A549 (cell line): ENCODE measurements at regions of chr3 and their contacts with region 1.

Region 1: GRCh38 chr3:194315088-194315964 is 35.8 kb downstream of the CPN2 start:
- DNase-seq: peak; percentile 72 to 86
- ATAC-seq: peak; percentile 86 to 89
- H3K4me3 ChIP-seq: peak overlapping the region; percentile 43
- H3K27ac ChIP-seq: peak overlapping the region; percentile 78 to 88
- H3K4me1 ChIP-seq: peaks cover 56% of the 10 kb centered on the region
- CTCF ChIP-seq: peak; percentile 82
- EP300 ChIP-seq: peak in 1 of 2 experiments; percentile 54; a peak in 1 of 5 replicates
- POLR2A ChIP-seq: no peak
- RAD21 ChIP-seq: peak; percentile 86 to 97

Region 2: DNA sequence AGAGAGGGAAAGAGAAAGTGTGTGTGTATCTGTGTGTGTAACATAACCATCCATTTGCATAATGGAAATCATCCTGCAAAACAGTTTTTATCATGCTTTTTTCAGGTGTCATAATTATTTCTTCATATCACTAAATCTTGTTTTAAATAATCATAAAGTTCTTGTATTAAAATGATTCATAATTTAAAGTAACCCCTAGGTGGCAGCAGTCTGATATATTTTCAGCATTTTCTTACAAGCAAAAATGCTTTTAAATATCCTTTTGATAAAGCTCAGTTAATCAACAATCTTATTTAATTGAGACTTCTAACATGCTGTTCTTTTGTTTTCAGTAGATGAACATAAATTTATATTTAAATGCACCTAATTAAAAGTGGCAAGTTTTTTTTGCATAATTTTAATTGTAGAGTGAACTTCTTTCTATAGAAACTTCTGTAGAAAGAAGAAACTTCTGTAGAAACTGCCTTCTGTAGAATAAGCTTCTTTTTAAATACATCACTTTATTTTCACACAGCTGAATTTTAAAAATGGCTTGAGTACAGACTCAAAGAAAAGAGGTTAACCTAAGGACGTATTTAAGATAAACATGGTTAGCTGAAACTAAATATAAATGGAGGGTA is 649.8 kb before region 1 on chr3:
- CTCF ChIA-PET with region 1: interaction called, 26 read pairs
- POLR2A ChIA-PET with region 1: interaction called, 4 read pairs
- DNase-seq: peak in 1 of 2 experiments; percentile 21
- ATAC-seq: no peak
- H3K4me3 ChIP-seq: no peak overlapping the region
- H3K27ac ChIP-seq: no peak overlapping the region
- H3K4me1 ChIP-seq: no peaks in the 10 kb centered on the region
- CTCF ChIP-seq: peak; percentile 49
- EP300 ChIP-seq: no peak
- POLR2A ChIP-seq: no peak
- RAD21 ChIP-seq: peak; percentile 55 to 64

Region 3: DNA sequence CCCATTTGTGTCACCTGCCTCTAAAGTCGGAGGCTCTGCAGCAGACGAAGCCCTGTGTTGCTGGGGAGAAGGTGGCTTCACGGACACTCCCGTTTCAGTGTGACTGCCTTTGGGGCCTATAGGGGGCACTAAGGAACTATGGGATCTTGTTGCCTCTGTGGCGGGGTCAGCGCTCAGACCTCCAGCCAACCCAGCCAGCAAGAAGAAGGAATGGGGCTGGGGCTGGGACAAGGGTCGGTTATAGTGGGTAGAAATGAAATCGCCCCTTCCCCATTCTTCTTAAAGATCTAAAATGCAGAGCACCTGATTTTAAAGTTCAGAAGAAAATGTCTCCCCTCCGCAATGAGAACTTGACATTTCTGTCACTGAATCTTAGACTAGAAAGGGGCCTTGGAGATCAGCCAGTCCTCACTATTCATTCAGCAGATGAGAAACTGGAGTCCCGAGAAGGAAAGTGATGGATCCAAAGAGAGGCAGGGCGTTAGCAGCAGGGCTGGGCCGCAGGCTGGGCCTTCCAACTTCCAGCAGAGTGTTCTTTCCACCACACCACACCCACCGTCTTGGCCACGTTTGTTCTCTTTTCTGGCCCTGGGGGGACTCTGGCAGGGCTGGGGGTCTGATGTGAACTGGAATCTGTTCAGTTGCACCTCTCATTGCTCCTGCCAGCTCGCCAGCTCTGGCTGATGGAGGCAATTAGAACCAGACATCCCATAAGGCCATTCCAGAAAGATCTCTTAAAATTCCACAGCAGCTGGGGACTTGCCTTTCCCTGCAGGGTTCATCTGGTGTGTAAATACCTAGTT is 526.9 kb before region 1 on chr3:
- CTCF ChIA-PET with region 1: interaction called, 213 read pairs
- POLR2A ChIA-PET with region 1: no interaction called
- DNase-seq: peak; percentile 63 to 74
- ATAC-seq: peak; percentile 88 to 97
- H3K4me3 ChIP-seq: no peak overlapping the region
- H3K27ac ChIP-seq: peak overlapping the region; percentile 53 to 66; a peak in 4 of 6 replicates
- H3K4me1 ChIP-seq: peaks cover 18% of the 10 kb centered on the region
- CTCF ChIP-seq: peak; percentile 61
- EP300 ChIP-seq: no peak
- POLR2A ChIP-seq: no peak
- RAD21 ChIP-seq: peak; percentile 87

Region 4: GRCh38 chr3:194083637-194084224 is 231.6 kb before region 1 on chr3:
- CTCF ChIA-PET with region 1: interaction called, 10 read pairs
- POLR2A ChIA-PET with region 1: no interaction called
- DNase-seq: no peak
- ATAC-seq: no peak
- H3K4me3 ChIP-seq: no peak overlapping the region
- H3K27ac ChIP-seq: peak overlapping the region in 1 of 2 experiments; percentile 62; a peak in 3 of 6 replicates
- H3K4me1 ChIP-seq: peaks cover 11% of the 10 kb centered on the region
- CTCF ChIP-seq: no peak
- EP300 ChIP-seq: no peak
- POLR2A ChIP-seq: no peak
- RAD21 ChIP-seq: no peak

Region 5: GRCh38 chr3:194141415-194142155 is 173.7 kb before region 1 on chr3:
- CTCF ChIA-PET with region 1: interaction called, 116 read pairs
- POLR2A ChIA-PET with region 1: interaction called, 14 read pairs
- DNase-seq: peak; percentile 66 to 83
- ATAC-seq: peak; percentile 53 to 59
- H3K4me3 ChIP-seq: peak overlapping the region; percentile 47
- H3K27ac ChIP-seq: peak overlapping the region; percentile 99 to 100
- H3K4me1 ChIP-seq: peaks cover 41% of the 10 kb centered on the region
- CTCF ChIP-seq: no peak
- EP300 ChIP-seq: peak; percentile 16 to 56; a peak in 2 of 5 replicates
- POLR2A ChIP-seq: no peak; the same call in 1 of the 2 replicates
- RAD21 ChIP-seq: 0 out of 5 replicates have a peak, but pooled peaks of 1 of the 2 experiments have one; percentile 18

Region 6: GRCh38 chr3:194194051-194194756 is 121.1 kb before region 1 on chr3:
- CTCF ChIA-PET with region 1: no interaction called
- POLR2A ChIA-PET with region 1: no interaction called
- DNase-seq: no peak
- ATAC-seq: no peak
- H3K4me3 ChIP-seq: no peak overlapping the region
- H3K27ac ChIP-seq: no peak overlapping the region
- H3K4me1 ChIP-seq: no peaks in the 10 kb centered on the region
- CTCF ChIP-seq: no peak
- EP300 ChIP-seq: no peak
- POLR2A ChIP-seq: no peak
- RAD21 ChIP-seq: no peak

Region 7: GRCh38 chr3:194296454-194297263 is 18.7 kb before region 1 on chr3:
- CTCF ChIA-PET with region 1: interaction called, 15 read pairs
- POLR2A ChIA-PET with region 1: no interaction called
- DNase-seq: peak; percentile 50 to 66
- ATAC-seq: peak; percentile 67 to 74; a peak in 5 of 6 replicates
- H3K4me3 ChIP-seq: no peak overlapping the region
- H3K27ac ChIP-seq: peak overlapping the region; percentile 79 to 93
- H3K4me1 ChIP-seq: peaks cover 17% of the 10 kb centered on the region
- CTCF ChIP-seq: no peak
- EP300 ChIP-seq: no peak
- POLR2A ChIP-seq: no peak
- RAD21 ChIP-seq: no peak

Region 8: GRCh38 chr3:194512895-194513601 is 197.7 kb after region 1 on chr3:
- CTCF ChIA-PET with region 1: no interaction called
- POLR2A ChIA-PET with region 1: no interaction called
- DNase-seq: no peak
- ATAC-seq: no peak
- H3K4me3 ChIP-seq: no peak overlapping the region
- H3K27ac ChIP-seq: no peak overlapping the region
- H3K4me1 ChIP-seq: 0 out of 3 replicates have a peak, but pooled peaks cover 2% of the 10 kb centered on the region
- CTCF ChIP-seq: no peak
- EP300 ChIP-seq: no peak
- POLR2A ChIP-seq: no peak
- RAD21 ChIP-seq: no peak